Right lobe of liver (tissue), 6 donors: ENCODE measurements at regions of chr3 and their contacts with region 1.

Region 1: GRCh38 chr3:98732286-98733052 is 30.7 kb upstream of the ST3GAL6 start:
- DNase-seq: peak; percentile 82 to 91 (median 87)
- ATAC-seq: peak; percentile 77 to 92 (median 83)
- H3K4me3 ChIP-seq: peak overlapping the region; percentile 78 to 97 (median 96)
- H3K27ac ChIP-seq: peak overlapping the region; percentile 74 to 90 (median 89)
- H3K4me1 ChIP-seq: peaks cover 0 to 21% (median 3%) of the 10 kb centered on the region in 4 donors
- H3K27me3 ChIP-seq: no peaks in the 10 kb centered on the region
- CTCF ChIP-seq: no peak
- POLR2A ChIP-seq: peak; percentile 67

Region 2: GRCh38 chr3:98784666-98785600 is 52.5 kb after region 1 on chr3:
- intact Hi-C with region 1: loop called in 1 of 2 experiments (anchors 10 kb)
- DNase-seq: no peak
- ATAC-seq: peak; percentile 29 to 50 (median 46)
- H3K4me3 ChIP-seq: no peak overlapping the region
- H3K27ac ChIP-seq: peak overlapping the region; percentile 38 to 70 (median 41)
- H3K4me1 ChIP-seq: peaks cover 0 to 66% (median 24%) of the 10 kb centered on the region in 4 donors
- H3K27me3 ChIP-seq: no peaks in the 10 kb centered on the region
- CTCF ChIP-seq: no peak
- POLR2A ChIP-seq: no peak